H1 (cell line): ENCODE measurements at regions of chr3 and their contacts with region 1.

Region 1: GRCh38 chr3:128503164-128503651 is 10.2 kb upstream of the GATA2 start:
- DNase-seq: peak in 1 of 2 experiments; percentile 50
- H3K4me3 ChIP-seq: no peak overlapping the region
- H3K27ac ChIP-seq: no peak overlapping the region; the same call in 1 of the 2 replicates
- H3K4me1 ChIP-seq: peaks cover 0 to 2% (median 0%) of the 10 kb centered on the region in 4 experiments; a peak in 1 of 7 replicates
- H3K27me3 ChIP-seq: peaks cover 0 to 11% (median 10%) of the 10 kb centered on the region in 4 experiments; a peak in 6 of 7 replicates
- CTCF ChIP-seq: peak in 2 of 3 experiments; percentile 56 to 64; a peak in 3 of 4 replicates
- EP300 ChIP-seq: no peak
- POLR2A ChIP-seq: no peak
- RAD21 ChIP-seq: peak; percentile 54 to 70

Region 2: GRCh38 chr3:128524374-128525299 is 21.4 kb after region 1 on chr3:
- CTCF ChIA-PET with region 1: interaction called, 10 read pairs
- POLR2A ChIA-PET with region 1: no interaction called
- DNase-seq: no peak
- H3K4me3 ChIP-seq: no peak overlapping the region
- H3K27ac ChIP-seq: no peak overlapping the region
- H3K4me1 ChIP-seq: no peaks in the 10 kb centered on the region; a peak in 1 of 7 replicates
- H3K27me3 ChIP-seq: no peaks in the 10 kb centered on the region
- CTCF ChIP-seq: no peak
- EP300 ChIP-seq: no peak
- POLR2A ChIP-seq: no peak
- RAD21 ChIP-seq: no peak

Region 3: DNA sequence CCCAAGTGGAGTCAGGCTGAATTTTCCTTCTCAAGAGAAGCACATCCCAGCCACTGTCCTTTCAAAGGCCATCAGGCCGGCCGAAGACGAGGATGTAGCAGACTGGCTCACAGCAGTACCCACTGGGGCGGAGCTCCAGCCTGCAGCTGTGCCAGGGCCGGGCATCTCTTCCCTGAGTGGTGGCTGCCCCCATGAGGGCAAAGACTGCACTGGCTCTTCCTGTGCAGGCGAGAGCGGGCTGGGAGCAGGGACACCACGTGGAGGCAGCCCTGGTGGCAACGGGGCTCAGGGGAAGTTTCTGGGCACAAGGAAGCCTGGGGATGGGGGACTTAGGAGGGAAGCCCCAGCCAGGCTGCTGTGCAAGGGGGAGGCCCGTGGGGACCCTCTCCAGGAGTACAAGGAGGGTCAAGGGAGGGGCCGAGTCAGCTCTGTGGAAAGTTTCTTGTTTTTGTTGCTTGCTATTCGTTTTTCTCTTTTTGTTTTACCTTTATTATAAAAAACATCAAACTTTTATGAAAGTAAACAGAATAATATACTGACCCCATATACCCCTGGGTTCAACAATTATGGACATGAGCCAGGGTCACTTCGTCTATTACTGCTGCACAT is 81.3 kb after region 1 on chr3:
- CTCF ChIA-PET with region 1: interaction called, 21 read pairs
- POLR2A ChIA-PET with region 1: no interaction called
- DNase-seq: peak in 1 of 2 experiments; percentile 80
- H3K4me3 ChIP-seq: no peak overlapping the region
- H3K27ac ChIP-seq: no peak overlapping the region
- H3K4me1 ChIP-seq: peaks cover 0 to 3% (median 2%) of the 10 kb centered on the region in 4 experiments; a peak in 4 of 7 replicates
- H3K27me3 ChIP-seq: peaks cover 0 to 7% (median 5%) of the 10 kb centered on the region in 4 experiments; a peak in 3 of 7 replicates
- CTCF ChIP-seq: peak in 2 of 3 experiments; percentile 95 to 97; a peak in 3 of 4 replicates
- EP300 ChIP-seq: 0 out of 3 replicates have a peak, but pooled peaks of 1 of the 2 experiments have one; percentile 7
- POLR2A ChIP-seq: no peak
- RAD21 ChIP-seq: peak; percentile 98 to 100